Mammary epithelial cell (primary cell): ENCODE measurements at regions of chr20 and their contacts with region 1.

Region 1: DNA sequence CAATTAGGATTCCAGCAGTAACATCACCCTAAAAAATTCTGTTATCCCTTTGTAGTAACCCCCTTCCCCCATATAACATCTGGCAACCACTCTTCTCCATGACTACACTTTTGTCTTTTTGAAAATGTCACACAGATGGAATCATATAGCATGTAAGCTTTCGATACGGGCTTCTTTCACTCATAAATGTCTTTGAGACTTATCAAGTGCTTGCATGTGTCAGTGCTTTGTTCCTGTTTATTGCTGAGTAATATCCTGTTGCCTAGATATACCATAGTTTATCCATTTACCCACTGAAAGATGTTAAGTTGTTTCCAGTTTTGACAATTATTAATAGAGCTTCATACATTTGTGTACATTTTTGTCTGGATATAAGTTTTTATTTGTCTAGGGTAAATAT is 10.4 kb upstream of the SNPH start:
- DNase-seq: no peak
- H3K4me3 ChIP-seq: no peak overlapping the region
- H3K27ac ChIP-seq: no peak overlapping the region
- H3K4me1 ChIP-seq: no peaks in the 10 kb centered on the region
- H3K27me3 ChIP-seq: peaks cover 4% of the 10 kb centered on the region
- CTCF ChIP-seq: no peak

Region 2: GRCh38 chr20:1144401-1145172 is 111.1 kb before region 1 on chr20:
- CTCF ChIA-PET with region 1: no interaction called
- dilution Hi-C with region 1: no loop called
- in situ Hi-C with region 1: no loop called
- intact Hi-C with region 1: no loop called
- DNase-seq: no peak
- H3K4me3 ChIP-seq: no peak overlapping the region
- H3K27ac ChIP-seq: no peak overlapping the region
- H3K4me1 ChIP-seq: no peaks in the 10 kb centered on the region
- H3K27me3 ChIP-seq: no peaks in the 10 kb centered on the region
- CTCF ChIP-seq: no peak

Region 3: DNA sequence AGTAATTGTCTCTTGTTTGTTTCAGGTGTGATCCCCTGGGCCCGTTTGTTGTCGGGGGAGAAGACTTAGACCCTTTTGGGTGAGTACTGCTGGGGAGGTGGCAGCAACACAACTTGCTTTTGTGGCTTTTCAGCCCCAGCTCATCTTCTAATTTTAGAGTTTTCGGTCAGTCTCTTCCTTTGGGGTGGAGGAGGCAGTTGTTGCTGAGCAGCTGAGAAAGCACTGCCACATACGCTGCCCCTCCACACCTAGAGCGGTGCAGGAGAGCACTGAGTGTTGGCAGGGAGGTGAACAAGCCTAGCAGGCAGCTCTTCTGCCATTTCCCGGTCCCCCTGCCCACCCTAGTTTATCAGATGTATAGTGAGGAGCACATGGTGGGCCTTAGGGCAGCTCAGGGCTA is 92.6 kb before region 1 on chr20:
- CTCF ChIA-PET with region 1: no interaction called
- dilution Hi-C with region 1: no loop called
- in situ Hi-C with region 1: no loop called
- intact Hi-C with region 1: no loop called
- DNase-seq: no peak
- H3K4me3 ChIP-seq: no peak overlapping the region
- H3K27ac ChIP-seq: no peak overlapping the region
- H3K4me1 ChIP-seq: no peaks in the 10 kb centered on the region
- H3K27me3 ChIP-seq: no peaks in the 10 kb centered on the region
- CTCF ChIP-seq: no peak

Region 4: DNA sequence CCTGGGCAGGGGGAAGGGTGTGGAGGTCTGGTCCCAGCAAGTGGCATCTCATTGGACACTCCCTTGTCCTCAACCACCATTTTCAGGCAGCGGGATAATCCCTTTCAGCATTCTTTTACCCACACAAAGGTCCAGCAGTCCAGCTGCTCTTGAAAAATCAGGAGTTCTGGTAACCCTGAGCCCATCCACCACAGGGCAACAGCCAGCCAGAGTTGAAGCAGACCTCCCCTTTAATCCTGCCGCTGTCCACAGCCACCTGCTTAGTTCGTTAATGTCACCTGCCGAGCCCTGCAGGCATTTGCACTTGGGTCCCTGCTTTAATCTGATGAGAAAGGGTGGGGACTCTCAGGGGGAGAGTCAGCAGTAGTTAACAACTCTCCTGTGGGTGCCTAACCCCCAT is 82.0 kb before region 1 on chr20:
- CTCF ChIA-PET with region 1: no interaction called
- dilution Hi-C with region 1: no loop called
- in situ Hi-C with region 1: no loop called
- intact Hi-C with region 1: no loop called
- DNase-seq: no peak
- H3K4me3 ChIP-seq: no peak overlapping the region
- H3K27ac ChIP-seq: no peak overlapping the region
- H3K4me1 ChIP-seq: no peaks in the 10 kb centered on the region
- H3K27me3 ChIP-seq: no peaks in the 10 kb centered on the region
- CTCF ChIP-seq: no peak

Region 5: DNA sequence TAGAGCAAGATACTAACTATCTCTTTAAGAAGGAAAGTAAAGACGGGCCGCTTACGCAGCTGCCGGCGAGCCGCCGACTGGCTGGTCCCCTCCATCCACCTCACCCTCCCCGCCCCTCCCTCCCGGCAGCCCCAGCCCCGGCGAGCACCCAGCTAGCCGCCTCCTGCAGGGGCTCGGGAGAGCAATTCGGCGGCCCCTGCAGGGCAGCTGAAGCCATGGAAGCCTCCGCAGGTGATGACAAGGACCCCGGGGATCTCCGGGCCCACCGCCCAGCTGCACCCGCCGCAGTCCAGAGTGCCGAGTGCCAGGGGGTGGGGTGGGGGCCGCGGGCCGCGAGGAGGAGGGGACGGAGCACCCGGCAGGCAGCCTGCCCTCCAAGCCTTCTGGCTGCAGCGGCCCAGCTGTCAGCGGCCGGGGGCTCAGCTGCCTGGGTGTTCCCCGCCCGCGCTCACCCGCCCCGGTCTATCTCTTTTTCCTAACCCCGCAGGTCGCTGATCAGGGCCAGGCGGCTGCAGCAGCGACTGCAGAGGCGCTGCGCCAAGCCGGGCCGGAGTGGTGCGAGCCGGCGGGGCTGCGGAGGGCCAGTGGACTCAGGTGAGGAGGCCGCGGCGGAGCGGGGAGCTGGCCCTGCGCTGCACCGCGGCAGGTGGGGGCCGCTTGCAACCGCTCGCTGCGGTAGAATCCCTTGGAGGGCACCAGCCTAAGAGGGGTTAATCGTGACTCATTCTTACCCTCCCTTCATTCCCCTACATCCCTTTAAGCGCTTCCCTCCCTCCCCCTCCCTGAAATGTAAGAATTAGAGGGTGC is 10.7 kb after region 1 on chr20 and contains the start of gene SNPH:
- CTCF ChIA-PET with region 1: no interaction called
- dilution Hi-C with region 1: no loop called
- in situ Hi-C with region 1: no loop called
- intact Hi-C with region 1: loop called (anchors 1 kb)
- DNase-seq: peak; percentile 73
- H3K4me3 ChIP-seq: peak within 1 kb of the TSS; percentile 65 to 80 (median 73)
- H3K27ac ChIP-seq: peak within 1 kb of the TSS; percentile 43
- H3K4me1 ChIP-seq: no peaks in the 10 kb centered on the region
- H3K27me3 ChIP-seq: no peaks in the 10 kb centered on the region
- CTCF ChIP-seq: no peak
- total RNA-seq, gene SNPH: 7.6 to 11.2 TPM

Region 6: DNA sequence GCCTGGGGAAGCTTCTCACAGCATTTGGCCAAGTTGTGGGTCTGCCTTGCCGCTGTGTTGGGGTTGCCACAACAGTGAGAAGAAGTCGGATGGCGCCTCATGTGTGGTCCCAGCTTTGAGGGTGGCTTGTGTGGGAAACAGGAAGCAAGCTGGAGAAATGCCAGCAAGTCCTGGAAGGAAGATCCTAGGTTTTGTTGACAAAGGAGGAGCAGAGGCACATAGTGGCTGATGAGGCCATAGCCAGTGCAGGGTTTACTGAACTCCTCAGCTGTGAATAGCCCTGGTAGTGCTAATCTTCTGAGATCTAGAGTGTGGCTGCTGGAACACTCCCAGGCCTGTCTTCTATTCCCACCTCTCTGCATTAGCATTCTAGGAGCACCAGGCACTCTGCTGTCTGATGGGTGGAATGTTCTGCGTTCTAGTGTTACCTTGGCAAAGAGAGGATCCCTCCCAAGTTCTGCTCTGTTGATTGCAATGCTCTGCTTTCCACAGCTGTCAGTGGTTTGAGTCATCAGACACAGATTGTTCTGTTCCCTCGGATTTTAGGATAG is 35.6 kb after region 1 on chr20:
- CTCF ChIA-PET with region 1: no interaction called
- dilution Hi-C with region 1: no loop called
- in situ Hi-C with region 1: no loop called
- intact Hi-C with region 1: no loop called
- DNase-seq: peak; percentile 7
- H3K4me3 ChIP-seq: no peak overlapping the region
- H3K27ac ChIP-seq: no peak overlapping the region
- H3K4me1 ChIP-seq: no peaks in the 10 kb centered on the region
- H3K27me3 ChIP-seq: no peaks in the 10 kb centered on the region
- CTCF ChIP-seq: no peak